Dendritic cell treated with granulocyte-macrophage colony-stimulating factor and Interleukin-4, amounts not matched to agents 40 ng/mL and 50 ng/mL, for 4 days (primary cell): ENCODE measurements at regions of chr22 and their contacts with region 1.

Region 1: DNA sequence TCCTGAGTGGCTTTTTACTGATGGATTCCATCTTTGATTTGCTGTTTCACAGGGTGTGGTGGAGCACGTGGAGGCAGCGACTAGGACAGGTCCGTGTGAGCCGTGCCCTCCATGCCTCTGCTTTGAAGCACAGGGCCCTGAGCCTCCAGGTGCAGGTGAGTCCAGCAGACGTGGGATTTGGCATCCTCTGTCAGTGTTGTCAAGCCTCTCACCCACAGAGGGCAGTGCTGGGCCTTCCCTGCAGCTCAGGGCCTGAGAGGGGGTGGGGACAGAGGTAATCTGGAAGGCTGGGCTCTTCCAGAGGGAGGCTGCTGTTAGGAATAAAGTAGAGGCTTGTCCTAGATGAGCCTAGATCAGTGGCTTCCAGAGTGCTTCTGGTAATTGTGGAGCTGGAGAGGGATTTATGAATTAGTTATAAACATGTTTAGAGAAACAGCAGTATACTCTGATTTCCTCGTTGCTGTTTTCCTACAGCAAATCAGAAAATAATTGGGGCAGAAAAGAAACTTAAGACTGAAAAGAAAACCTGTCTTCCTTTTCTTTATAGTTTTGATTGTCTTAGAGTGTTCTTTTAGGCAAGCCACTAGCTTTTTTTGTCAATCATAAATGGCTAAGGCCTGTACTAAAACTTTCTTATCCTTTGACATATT is 65.0 kb downstream of the SFI1 start:
- H3K4me3 Mint-ChIP-seq: no peak overlapping the region
- H3K27ac Mint-ChIP-seq: no peak overlapping the region
- H3K4me1 Mint-ChIP-seq: no peaks in the 10 kb centered on the region
- H3K27me3 Mint-ChIP-seq: no peaks in the 10 kb centered on the region

Region 2: DNA sequence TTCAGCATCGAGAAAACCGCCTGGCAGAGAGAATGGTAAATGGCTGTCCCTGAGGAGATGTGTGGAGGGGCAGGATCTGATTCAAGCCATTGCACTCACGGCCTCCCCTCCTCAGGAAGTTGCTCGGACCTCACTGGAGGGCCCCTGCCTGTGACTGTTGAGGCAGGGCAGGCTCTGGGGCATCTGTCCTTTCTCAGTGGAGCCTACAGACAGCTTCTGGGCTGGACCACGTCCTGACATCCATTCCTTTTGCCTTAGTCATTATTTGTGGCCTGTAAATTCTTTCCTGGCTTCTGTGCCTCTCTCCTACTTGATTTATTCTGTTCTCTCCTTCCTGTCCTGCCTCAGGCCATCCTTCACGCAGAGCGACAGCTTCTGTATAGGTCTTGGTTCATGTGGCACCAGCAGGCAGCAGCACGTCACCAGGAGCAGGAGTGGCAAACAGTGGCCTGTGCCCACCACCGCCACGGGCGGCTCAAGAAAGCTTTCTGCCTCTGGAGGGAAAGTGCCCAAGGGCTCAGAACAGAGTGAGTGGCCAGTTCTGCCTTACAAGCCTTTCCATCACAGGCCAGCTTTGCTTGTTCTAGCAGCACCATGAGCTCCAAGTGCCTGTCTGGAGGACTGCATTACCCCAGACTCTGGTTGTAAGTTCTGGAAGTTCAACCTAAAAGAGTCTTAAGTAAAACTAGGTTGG is 41.0 kb after region 1 on chr22:
- intact Hi-C with region 1: no loop called
- H3K4me3 Mint-ChIP-seq: no peak overlapping the region
- H3K27ac Mint-ChIP-seq: no peak overlapping the region
- H3K4me1 Mint-ChIP-seq: no peaks in the 10 kb centered on the region
- H3K27me3 Mint-ChIP-seq: no peaks in the 10 kb centered on the region

Region 3: GRCh38 chr22:31616315-31617001 is 55.1 kb after region 1 on chr22:
- intact Hi-C with region 1: loop called (anchors 5 kb)
- H3K4me3 Mint-ChIP-seq: no peak overlapping the region
- H3K27ac Mint-ChIP-seq: peak overlapping the region; percentile 66
- H3K4me1 Mint-ChIP-seq: peaks cover 44% of the 10 kb centered on the region
- H3K27me3 Mint-ChIP-seq: no peaks in the 10 kb centered on the region

Region 4: GRCh38 chr22:31630331-31631329 is 69.3 kb after region 1 on chr22:
- intact Hi-C with region 1: loop called (anchors 1 kb)
- H3K4me3 Mint-ChIP-seq: peak overlapping the region; percentile 84
- H3K27ac Mint-ChIP-seq: peak overlapping the region; percentile 78
- H3K4me1 Mint-ChIP-seq: peaks cover 84% of the 10 kb centered on the region
- H3K27me3 Mint-ChIP-seq: no peaks in the 10 kb centered on the region